Activated CD4-positive, alpha-beta memory T cell treated with anti-CD3 and anti-CD28 coated beads for 36 hours (primary cell): ENCODE measurements at regions of chr13 and their contacts with region 1.

Region 1: DNA sequence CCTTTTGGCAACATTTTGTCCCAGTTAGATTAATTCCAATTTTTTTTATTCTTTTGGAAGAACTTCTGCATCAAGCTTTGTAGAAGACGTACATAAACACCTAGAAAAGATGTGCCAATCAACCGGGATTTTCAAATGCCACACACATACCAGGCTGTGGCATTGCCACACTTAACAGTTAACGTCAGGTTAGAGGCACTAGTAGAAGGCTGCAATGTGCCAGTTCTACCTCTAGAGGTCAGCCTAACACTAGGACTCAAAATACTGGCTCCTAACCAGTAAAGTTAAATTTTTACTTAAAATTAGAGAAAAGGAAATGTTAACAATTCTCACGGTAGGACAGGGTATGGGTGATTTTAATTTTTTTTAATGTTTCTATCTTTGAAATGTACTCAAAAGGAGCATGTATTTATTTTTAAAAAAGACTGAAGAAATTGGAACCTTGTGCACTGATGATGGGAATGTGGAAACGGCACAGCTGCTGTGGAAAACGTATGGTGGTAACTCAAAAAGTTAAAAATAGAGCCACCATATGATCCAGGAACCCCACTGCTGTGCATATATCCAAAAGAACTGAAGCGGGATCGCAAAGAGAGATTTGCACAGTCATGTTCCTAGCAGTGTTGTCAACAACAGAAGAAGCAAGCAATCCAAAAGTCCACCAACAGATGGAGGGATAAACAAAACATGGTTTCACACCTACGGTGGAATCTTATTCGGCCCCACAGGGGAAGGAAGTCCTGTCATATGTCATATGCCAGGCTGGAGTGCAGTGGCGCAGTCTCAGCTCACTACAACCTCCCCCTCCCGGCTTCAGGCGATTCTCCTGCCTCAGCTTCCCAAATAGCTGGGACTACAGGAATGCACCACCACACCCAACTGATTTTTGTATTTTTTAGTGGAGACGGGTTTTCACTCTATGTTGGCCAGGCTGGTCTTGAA is 30.3 kb downstream of the CRYL1 start:
- DNase-seq: peak; percentile 66
- H3K4me3 Mint-ChIP-seq: no peak overlapping the region
- H3K27ac Mint-ChIP-seq: no peak overlapping the region
- H3K4me1 Mint-ChIP-seq: no peaks in the 10 kb centered on the region
- H3K27me3 Mint-ChIP-seq: no peaks in the 10 kb centered on the region

Region 2: GRCh38 chr13:20049558-20050473 is 445.5 kb before region 1 on chr13:
- CTCF ChIA-PET with region 1: no interaction called
- POLR2A ChIA-PET with region 1: no interaction called
- intact Hi-C with region 1: no loop called
- DNase-seq: no peak
- H3K4me3 Mint-ChIP-seq: no peak overlapping the region
- H3K27ac Mint-ChIP-seq: no peak overlapping the region
- H3K4me1 Mint-ChIP-seq: peaks cover 19% of the 10 kb centered on the region
- H3K27me3 Mint-ChIP-seq: no peaks in the 10 kb centered on the region

Region 3: DNA sequence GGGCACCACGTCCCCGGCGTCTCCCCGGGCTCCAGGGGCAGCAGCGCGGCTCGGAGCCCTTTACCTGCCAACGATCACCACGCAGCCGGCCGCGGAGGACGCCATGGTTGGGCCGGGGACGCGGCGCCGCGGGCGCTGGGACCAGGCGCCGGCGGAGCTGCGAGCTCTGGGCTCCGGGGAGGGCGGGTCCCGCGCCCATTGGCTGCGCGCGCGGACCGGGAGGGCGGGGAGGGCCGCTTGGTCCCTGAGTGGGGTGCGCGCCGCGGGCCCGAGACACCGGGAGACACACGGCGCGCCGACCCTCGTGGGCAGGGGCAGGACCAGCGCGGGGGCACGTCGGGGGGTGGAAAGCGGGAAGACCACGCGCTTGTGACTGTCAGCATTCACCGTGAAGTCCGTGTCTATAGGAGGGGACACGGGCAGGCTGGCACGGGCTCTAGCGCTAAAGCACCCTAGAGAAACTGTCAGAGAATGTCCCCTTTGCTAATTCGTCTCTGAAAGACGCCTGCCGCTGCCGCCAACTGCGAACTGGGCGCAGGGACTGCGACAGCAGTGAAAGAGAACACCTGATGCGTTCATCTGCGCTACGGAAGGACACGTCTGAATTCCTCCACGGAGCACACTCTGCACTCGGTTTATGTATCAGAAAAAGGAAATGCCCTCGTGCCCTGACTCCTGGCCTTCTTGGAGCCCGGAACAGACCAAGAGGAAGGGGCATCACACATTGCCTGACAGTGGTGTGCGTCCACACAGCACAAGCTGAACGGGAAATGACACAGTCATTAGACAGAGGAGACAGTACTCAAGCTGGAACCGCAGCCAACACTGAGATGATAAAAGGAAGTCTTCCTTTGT is 30.6 kb after region 1 on chr13 and contains the start of gene CRYL1:
- CTCF ChIA-PET with region 1: no interaction called
- POLR2A ChIA-PET with region 1: no interaction called
- intact Hi-C with region 1: loop called (anchors 2 kb)
- DNase-seq: peak; percentile 77
- H3K4me3 Mint-ChIP-seq: peak within 1 kb of the TSS; percentile 84
- H3K27ac Mint-ChIP-seq: peak within 1 kb of the TSS; percentile 86
- H3K4me1 Mint-ChIP-seq: peaks cover 33% of the 10 kb centered on the region
- H3K27me3 Mint-ChIP-seq: peaks cover 5% of the 10 kb centered on the region
- total RNA-seq, gene CRYL1: 17.5 to 18.2 TPM

Region 4: GRCh38 chr13:20703780-20704445 is 208.6 kb after region 1 on chr13:
- CTCF ChIA-PET with region 1: interaction called, 6 read pairs
- POLR2A ChIA-PET with region 1: no interaction called
- intact Hi-C with region 1: loop called (anchors 5 kb)
- DNase-seq: peak; percentile 82
- H3K4me3 Mint-ChIP-seq: no peak overlapping the region
- H3K27ac Mint-ChIP-seq: no peak overlapping the region
- H3K4me1 Mint-ChIP-seq: peaks cover 15% of the 10 kb centered on the region
- H3K27me3 Mint-ChIP-seq: peaks cover 17% of the 10 kb centered on the region

Region 5: GRCh38 chr13:20822406-20822805 is 327.1 kb after region 1 on chr13:
- CTCF ChIA-PET with region 1: interaction called, 12 read pairs
- POLR2A ChIA-PET with region 1: no interaction called
- intact Hi-C with region 1: no loop called
- DNase-seq: no peak
- H3K4me3 Mint-ChIP-seq: no peak overlapping the region
- H3K27ac Mint-ChIP-seq: no peak overlapping the region
- H3K4me1 Mint-ChIP-seq: peaks cover 15% of the 10 kb centered on the region
- H3K27me3 Mint-ChIP-seq: no peaks in the 10 kb centered on the region

Region 6: GRCh38 chr13:20869542-20869941 is 374.2 kb after region 1 on chr13:
- CTCF ChIA-PET with region 1: no interaction called
- POLR2A ChIA-PET with region 1: no interaction called
- intact Hi-C with region 1: no loop called
- DNase-seq: no peak
- H3K4me3 Mint-ChIP-seq: no peak overlapping the region
- H3K27ac Mint-ChIP-seq: no peak overlapping the region
- H3K4me1 Mint-ChIP-seq: peaks cover 28% of the 10 kb centered on the region
- H3K27me3 Mint-ChIP-seq: no peaks in the 10 kb centered on the region

Region 7: DNA sequence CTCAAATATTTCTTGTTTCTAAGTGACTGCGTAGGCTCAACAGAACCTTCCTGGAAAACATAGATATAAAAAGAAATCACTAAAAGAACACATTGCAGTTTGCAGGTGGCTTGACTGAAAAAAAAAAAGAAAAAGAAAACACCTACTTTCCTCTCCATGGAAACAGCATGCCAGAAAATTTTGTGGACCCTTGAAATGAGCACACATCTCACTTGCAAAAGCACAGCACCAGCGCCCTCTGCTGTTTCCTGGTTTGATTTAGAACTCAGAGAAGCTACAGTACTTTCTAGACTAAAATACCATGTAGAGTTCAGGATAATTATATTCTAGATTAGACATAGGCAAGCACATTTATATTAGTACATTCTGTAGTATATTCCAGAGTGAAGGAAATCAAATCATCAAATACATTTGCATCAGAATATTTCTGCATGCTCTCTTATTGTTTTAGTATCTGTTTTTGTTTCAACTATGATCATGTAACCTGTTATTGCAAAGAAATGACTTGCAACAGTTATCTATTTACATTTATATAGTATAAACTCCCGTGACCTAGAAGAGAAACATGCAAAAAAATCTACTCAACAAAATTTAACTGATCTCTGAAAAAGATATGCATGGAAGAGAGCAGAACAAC is 429.5 kb after region 1 on chr13:
- CTCF ChIA-PET with region 1: interaction called, 25 read pairs
- POLR2A ChIA-PET with region 1: no interaction called
- intact Hi-C with region 1: loop called (anchors 1 kb)
- DNase-seq: peak; percentile 77
- H3K4me3 Mint-ChIP-seq: no peak overlapping the region
- H3K27ac Mint-ChIP-seq: no peak overlapping the region
- H3K4me1 Mint-ChIP-seq: no peaks in the 10 kb centered on the region
- H3K27me3 Mint-ChIP-seq: no peaks in the 10 kb centered on the region